Activated T-helper 1 cell treated with anti-CD3 and anti-CD28 coated beads, Interleukin-12 subunit alpha, Interleukin-12 subunit beta, Interleukin-2, Interleukin-4 antibody, amounts not matched to agents 30 ng/mL and 10 ng/mL and 1 ng/mL, durations not matched to agents 14 hours and 24 hours and 36 hours (primary cell): ENCODE measurements at regions of chrX and their contacts with region 1.

Region 1: GRCh38 chrX:30504309-30504708 is 73.3 kb downstream of the TASL start:
- DNase-seq: no peak
- H3K4me3 Mint-ChIP-seq: no peak overlapping the region
- H3K27ac Mint-ChIP-seq: no peak overlapping the region
- H3K4me1 Mint-ChIP-seq: no peaks in the 10 kb centered on the region
- H3K27me3 Mint-ChIP-seq: peaks cover 3% of the 10 kb centered on the region

Region 2: DNA sequence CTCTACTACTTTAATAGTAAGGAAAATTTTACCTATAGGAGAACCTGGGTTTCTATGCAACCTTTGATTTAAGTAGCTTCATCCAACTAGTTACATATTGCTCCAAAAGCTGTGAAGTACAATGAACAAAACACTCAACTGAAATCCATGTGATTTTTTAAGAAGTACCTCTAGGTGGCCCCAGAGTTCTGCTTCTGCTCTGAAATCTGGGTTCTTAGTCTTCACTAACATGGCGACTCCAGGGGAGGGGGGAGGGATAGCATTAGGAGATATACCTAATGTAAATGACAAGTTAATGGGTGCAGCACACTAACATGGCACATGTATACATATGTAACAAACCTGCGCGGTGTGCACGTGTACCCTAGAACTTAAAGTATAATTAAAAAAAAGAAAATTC is 362.3 kb before region 1 on chrX:
- intact Hi-C with region 1: loop called (anchors 5 kb)
- DNase-seq: no peak
- H3K4me3 Mint-ChIP-seq: no peak overlapping the region
- H3K27ac Mint-ChIP-seq: no peak overlapping the region
- H3K4me1 Mint-ChIP-seq: no peaks in the 10 kb centered on the region
- H3K27me3 Mint-ChIP-seq: peaks cover 2% of the 10 kb centered on the region

Region 3: GRCh38 chrX:30275498-30275897 is 228.8 kb before region 1 on chrX:
- intact Hi-C with region 1: loop called (anchors 10 kb)
- DNase-seq: no peak
- H3K4me3 Mint-ChIP-seq: no peak overlapping the region
- H3K27ac Mint-ChIP-seq: no peak overlapping the region
- H3K4me1 Mint-ChIP-seq: no peaks in the 10 kb centered on the region
- H3K27me3 Mint-ChIP-seq: peaks cover 5% of the 10 kb centered on the region